ENCODE measurements at regions of chr3 and their contacts with region 1.

Region 1: DNA sequence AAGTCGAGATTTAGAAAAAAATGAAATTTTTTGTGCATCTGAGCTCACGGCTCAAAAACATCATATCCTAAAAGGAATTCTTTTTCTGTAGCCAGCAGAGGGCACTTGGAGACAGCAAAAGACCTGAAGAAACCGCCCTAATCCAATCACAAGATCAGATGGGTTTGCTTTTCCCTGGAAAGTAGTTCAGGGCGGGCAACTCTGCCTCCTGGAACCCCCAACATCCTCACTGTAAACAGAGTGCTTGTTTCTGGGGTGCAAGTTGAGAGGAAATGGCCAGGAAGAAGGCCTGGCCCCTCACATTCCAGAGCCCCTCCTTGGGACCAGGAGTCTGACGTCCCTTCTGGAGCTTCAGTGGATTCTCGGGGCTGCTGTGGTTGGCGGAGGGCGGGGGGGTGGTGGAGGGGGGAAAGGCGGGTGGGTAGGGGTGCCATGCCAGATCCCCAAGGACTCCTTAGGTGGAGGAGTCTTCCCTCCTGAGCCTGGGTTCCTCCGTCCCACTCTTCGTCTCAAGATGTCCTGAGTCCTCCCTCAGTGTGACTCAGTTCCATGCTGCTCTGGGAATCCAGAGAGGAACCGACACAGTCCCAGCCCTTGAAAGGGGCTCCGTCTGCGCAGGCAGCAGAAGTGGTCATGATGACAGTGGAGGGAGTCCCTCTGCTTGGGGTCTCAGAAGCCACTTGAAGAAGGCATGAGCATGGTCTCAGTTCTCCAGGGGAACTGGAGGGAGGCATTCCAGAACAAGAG is 35.9 kb downstream of the CCK start:
- DNase-seq: peak; percentile 46
- H3K4me3 ChIP-seq: no peak overlapping the region
- H3K27ac ChIP-seq: no peak overlapping the region
- H3K4me1 ChIP-seq: no peaks in the 10 kb centered on the region
- H3K27me3 ChIP-seq: peaks cover 4 to 7% of the 10 kb centered on the region in 2 experiments
- CTCF ChIP-seq: peak; percentile 43 to 45
- POLR2A ChIP-seq: no peak

Region 2: DNA sequence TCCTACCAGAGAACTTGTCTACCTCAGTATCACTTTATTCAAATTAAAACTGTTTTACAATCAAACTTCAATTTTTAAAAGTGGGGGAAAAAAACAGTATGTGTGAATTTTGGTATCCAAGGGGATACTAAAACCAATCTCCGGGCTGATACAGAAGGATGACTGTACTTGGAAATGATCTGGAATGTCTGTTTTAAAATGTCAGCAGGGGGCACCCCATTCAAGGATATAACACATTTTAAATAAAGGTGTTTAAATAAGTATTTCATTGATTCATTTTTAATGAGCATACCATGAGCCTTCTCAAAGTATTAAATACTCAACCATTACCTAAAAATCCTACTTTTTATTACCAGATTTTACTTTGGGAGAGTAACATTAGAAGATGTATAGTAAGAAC is 336.1 kb before region 1 on chr3:
- CTCF ChIA-PET with region 1: interaction called, 6 read pairs
- POLR2A ChIA-PET with region 1: no interaction called
- dilution Hi-C with region 1: no loop called
- intact Hi-C with region 1: loop called (anchors 1 kb)
- DNase-seq: peak; percentile 75
- H3K4me3 ChIP-seq: no peak overlapping the region
- H3K27ac ChIP-seq: no peak overlapping the region
- H3K4me1 ChIP-seq: no peaks in the 10 kb centered on the region
- H3K27me3 ChIP-seq: no peaks in the 10 kb centered on the region
- CTCF ChIP-seq: peak; percentile 14 to 22
- POLR2A ChIP-seq: no peak

Region 3: GRCh38 chr3:42539869-42540714 is 310.0 kb after region 1 on chr3:
- CTCF ChIA-PET with region 1: interaction called, 80 read pairs
- POLR2A ChIA-PET with region 1: no interaction called
- dilution Hi-C with region 1: no loop called
- intact Hi-C with region 1: loop called (anchors 1 kb)
- DNase-seq: no peak
- H3K4me3 ChIP-seq: no peak overlapping the region
- H3K27ac ChIP-seq: no peak overlapping the region
- H3K4me1 ChIP-seq: no peaks in the 10 kb centered on the region
- H3K27me3 ChIP-seq: no peaks in the 10 kb centered on the region
- CTCF ChIP-seq: peak; percentile 62 to 78
- POLR2A ChIP-seq: no peak

Region 4: GRCh38 chr3:42547401-42547945 is 317.4 kb after region 1 on chr3:
- CTCF ChIA-PET with region 1: interaction called, 80 read pairs
- POLR2A ChIA-PET with region 1: no interaction called
- dilution Hi-C with region 1: no loop called
- intact Hi-C with region 1: no loop called
- DNase-seq: peak; percentile 57
- H3K4me3 ChIP-seq: no peak overlapping the region
- H3K27ac ChIP-seq: no peak overlapping the region
- H3K4me1 ChIP-seq: no peaks in the 10 kb centered on the region
- H3K27me3 ChIP-seq: no peaks in the 10 kb centered on the region
- CTCF ChIP-seq: peak; percentile 95 to 96
- POLR2A ChIP-seq: no peak

Measured in endothelial cell of umbilical vein (primary cell).